Activated T-helper 1 cell treated with anti-CD3 and anti-CD28 coated beads, Interleukin-12 subunit alpha, Interleukin-12 subunit beta, Interleukin-2, Interleukin-4 antibody, amounts not matched to agents 30 ng/mL and 10 ng/mL and 1 ng/mL, durations not matched to agents 14 hours and 24 hours and 36 hours (primary cell): ENCODE measurements at regions of chr16 and their contacts with region 1.

Region 1: GRCh38 chr16:88700636-88701482 is 5.3 kb downstream of the RNF166 start:
- DNase-seq: peak; percentile 92
- H3K4me3 Mint-ChIP-seq: peak overlapping the region; percentile 89
- H3K27ac Mint-ChIP-seq: peak overlapping the region; percentile 94
- H3K4me1 Mint-ChIP-seq: peaks cover 57% of the 10 kb centered on the region
- H3K27me3 Mint-ChIP-seq: no peaks in the 10 kb centered on the region

Region 2: GRCh38 chr16:88639231-88640038 is 61.4 kb before region 1 on chr16:
- intact Hi-C with region 1: loop called (anchors 5 kb)
- DNase-seq: no peak
- H3K4me3 Mint-ChIP-seq: no peak overlapping the region
- H3K27ac Mint-ChIP-seq: no peak overlapping the region
- H3K4me1 Mint-ChIP-seq: peaks cover 21% of the 10 kb centered on the region
- H3K27me3 Mint-ChIP-seq: peaks cover 30% of the 10 kb centered on the region

Region 3: GRCh38 chr16:88686439-88687253 is 14.2 kb before region 1 on chr16 and contains the start of gene SNAI3:
- intact Hi-C with region 1: loop called (anchors 1 kb)
- DNase-seq: peak; percentile 87
- H3K4me3 Mint-ChIP-seq: peak within 1 kb of the TSS; percentile 80
- H3K27ac Mint-ChIP-seq: no peak within 1 kb of the TSS
- H3K4me1 Mint-ChIP-seq: peaks cover 46% of the 10 kb centered on the region
- H3K27me3 Mint-ChIP-seq: peaks cover 3% of the 10 kb centered on the region
- total RNA-seq, gene SNAI3: 1.8 and 2.4 TPM in 2 replicates

Region 4: GRCh38 chr16:88737298-88738150 is 36.7 kb after region 1 on chr16:
- intact Hi-C with region 1: no loop called
- DNase-seq: peak; percentile 49
- H3K4me3 Mint-ChIP-seq: no peak overlapping the region
- H3K27ac Mint-ChIP-seq: no peak overlapping the region
- H3K4me1 Mint-ChIP-seq: no peaks in the 10 kb centered on the region
- H3K27me3 Mint-ChIP-seq: no peaks in the 10 kb centered on the region

Region 5: GRCh38 chr16:88803264-88803987 is 102.6 kb after region 1 on chr16 and contains the start of gene CDT1:
- intact Hi-C with region 1: loop called (anchors 5 kb)
- DNase-seq: peak; percentile 84
- H3K4me3 Mint-ChIP-seq: peak within 1 kb of the TSS; percentile 85
- H3K27ac Mint-ChIP-seq: peak within 1 kb of the TSS; percentile 84
- H3K4me1 Mint-ChIP-seq: peaks cover 15% of the 10 kb centered on the region
- H3K27me3 Mint-ChIP-seq: no peaks in the 10 kb centered on the region
- total RNA-seq, gene CDT1: 95.4 and 97.3 TPM in 2 replicates

Region 6: DNA sequence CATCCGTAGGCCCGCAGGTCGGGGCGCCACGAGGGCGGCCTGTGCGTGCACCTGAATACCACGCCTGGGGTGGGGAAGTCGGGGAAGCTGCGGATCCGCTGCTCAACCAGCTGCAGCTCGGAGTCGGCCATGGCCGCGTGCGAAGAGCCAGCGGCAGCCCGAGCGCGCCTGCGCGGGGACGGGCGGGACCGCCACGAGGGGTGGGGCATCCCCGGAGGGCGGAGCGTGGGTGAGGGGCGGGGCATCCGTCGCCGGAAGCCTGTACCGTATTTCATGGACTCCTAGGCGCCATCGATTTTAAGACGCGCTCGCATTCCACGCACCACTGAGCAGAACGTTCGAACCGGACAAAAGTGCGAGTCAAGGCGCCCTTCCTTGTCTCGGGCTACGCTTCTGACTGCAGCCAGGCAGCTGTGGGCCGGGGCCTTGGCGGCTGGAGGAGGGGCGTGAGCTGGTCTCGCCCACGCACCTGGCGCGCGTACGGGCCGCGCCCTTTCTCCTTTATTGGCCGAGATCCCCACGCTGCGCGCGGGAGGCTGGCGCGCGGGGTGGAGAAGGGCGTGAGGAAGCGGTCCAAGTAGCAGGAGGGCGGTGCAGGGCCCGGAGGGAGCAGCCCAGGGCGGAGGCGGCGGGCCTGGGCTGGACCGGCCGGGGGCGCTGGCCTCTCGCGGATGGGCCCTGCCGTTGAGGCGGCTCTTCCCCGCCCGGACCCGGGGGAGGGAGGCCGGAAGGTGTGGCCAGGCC is 111.1 kb after region 1 on chr16 and contains the start of gene APRT:
- intact Hi-C with region 1: loop called (anchors 1 kb)
- DNase-seq: peak; percentile 97
- H3K4me3 Mint-ChIP-seq: peak within 1 kb of the TSS; percentile 90
- H3K27ac Mint-ChIP-seq: peak within 1 kb of the TSS; percentile 98
- H3K4me1 Mint-ChIP-seq: peaks cover 11% of the 10 kb centered on the region
- H3K27me3 Mint-ChIP-seq: no peaks in the 10 kb centered on the region
- total RNA-seq, gene APRT: 301 and 303 TPM in 2 replicates